Adrenal gland (tissue), 19 donors: ENCODE measurements at regions of chr7 and their contacts with region 1.

Region 1: GRCh38 chr7:883055-884021 is 7.0 kb downstream of the GET4 start:
- DNase-seq: peak in 3 of 7 donors; percentile 50 to 57 (median 51)
- H3K4me3 ChIP-seq: peak overlapping the region in 1 of 4 donors; percentile 31
- H3K27ac ChIP-seq: peak overlapping the region; percentile 55 to 87 (median 66)
- H3K4me1 ChIP-seq: peaks cover 39 to 78% of the 10 kb centered on the region in 2 donors
- H3K27me3 ChIP-seq: no peaks in the 10 kb centered on the region
- CTCF ChIP-seq: peak in 1 of 6 experiments; percentile 4
- POLR2A ChIP-seq: no peak

Region 2: DNA sequence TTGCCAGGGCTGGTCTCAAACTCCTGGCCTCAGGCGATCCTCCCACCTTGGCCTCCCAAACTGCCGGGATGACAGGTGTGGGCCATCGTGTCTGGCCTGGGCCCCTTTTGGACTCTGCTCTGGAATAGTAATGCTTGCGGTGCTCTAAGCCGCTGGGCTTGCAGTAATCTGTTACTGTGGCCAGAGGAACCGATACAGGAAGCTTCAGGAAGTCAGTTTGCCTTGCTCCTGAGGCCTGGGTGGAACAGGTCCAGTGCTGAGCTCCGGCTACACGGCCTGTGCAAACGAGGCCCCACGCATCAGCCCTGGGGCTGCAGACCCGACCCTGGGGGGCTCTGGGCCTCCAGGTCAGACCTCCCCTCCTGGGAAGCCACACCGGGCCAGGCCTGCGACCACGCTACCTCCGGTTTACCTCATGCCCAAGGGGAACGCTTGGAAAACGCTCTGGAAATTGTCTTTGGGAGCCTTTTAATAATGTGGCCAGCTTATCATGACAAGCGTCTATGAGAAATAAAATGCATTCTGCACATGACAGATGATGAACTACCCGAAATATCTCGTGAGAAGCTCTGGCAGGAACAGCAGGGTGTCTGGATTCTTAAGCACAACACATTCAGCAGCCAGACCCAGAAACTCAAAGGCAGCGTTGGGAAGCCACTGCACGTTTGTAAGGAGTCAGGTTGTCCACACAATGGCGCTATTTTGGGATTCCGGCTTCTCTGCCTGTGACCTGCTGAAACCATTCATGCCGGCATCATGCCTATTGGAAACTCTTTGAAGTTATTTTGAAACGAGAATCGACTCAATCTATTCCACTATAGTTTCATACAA is 81.3 kb after region 1 on chr7:
- intact Hi-C with region 1: loop called in 1 of 2 experiments (anchors 10 kb)
- DNase-seq: peak in 6 of 7 donors; percentile 78 to 90 (median 85)
- H3K4me3 ChIP-seq: peak overlapping the region in 1 of 4 donors; percentile 6
- H3K27ac ChIP-seq: peak overlapping the region in 4 of 5 donors; percentile 71 to 86 (median 76)
- H3K4me1 ChIP-seq: peaks cover 22 to 29% of the 10 kb centered on the region in 2 donors
- H3K27me3 ChIP-seq: no peaks in the 10 kb centered on the region
- CTCF ChIP-seq: peak in 4 of 6 experiments; percentile 29 to 44 (median 40)
- POLR2A ChIP-seq: peak in 1 of 2 donors; percentile 73